Mammary epithelial cell (primary cell): ENCODE measurements at regions of chr3 and their contacts with region 1.

Region 1: DNA sequence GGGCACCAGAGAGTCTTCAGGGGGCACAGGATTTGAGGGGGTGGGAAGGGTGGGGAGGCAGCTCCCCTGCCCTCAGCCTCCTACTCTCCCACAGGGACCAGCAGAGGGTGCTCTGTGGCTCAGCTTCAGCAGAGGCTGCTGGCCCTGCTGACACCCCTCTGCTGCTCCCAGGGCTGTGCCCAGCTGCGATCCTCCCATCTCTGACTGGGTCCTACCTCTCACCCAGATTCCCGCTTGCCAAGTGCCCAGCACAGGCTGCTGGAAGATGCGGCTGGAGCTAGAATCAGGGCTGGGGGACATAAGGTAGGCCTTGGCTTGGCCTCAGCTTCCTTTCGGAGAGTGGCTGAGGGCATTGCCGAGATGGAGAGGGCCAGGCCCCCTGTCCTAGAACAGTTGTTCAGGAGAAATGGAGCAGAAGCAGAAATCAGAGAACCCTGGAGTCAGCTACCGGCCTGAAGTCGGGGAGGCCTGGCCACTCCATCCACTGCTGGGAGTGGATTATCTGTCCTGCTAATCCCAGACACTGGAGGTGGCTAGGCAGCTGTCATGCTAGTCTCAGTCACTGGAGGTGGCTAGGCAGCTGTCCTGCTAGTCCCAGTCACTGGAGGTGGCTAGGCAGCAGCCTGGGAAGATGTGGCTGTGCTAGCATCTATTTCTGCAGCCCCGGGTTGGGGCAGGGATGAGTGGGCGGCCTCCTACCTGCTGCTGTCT is 3.9 kb downstream of the GRM2 start:
- DNase-seq: no peak
- H3K4me3 ChIP-seq: no peak overlapping the region
- H3K27ac ChIP-seq: no peak overlapping the region
- H3K4me1 ChIP-seq: no peaks in the 10 kb centered on the region
- H3K27me3 ChIP-seq: no peaks in the 10 kb centered on the region
- CTCF ChIP-seq: no peak

Region 2: DNA sequence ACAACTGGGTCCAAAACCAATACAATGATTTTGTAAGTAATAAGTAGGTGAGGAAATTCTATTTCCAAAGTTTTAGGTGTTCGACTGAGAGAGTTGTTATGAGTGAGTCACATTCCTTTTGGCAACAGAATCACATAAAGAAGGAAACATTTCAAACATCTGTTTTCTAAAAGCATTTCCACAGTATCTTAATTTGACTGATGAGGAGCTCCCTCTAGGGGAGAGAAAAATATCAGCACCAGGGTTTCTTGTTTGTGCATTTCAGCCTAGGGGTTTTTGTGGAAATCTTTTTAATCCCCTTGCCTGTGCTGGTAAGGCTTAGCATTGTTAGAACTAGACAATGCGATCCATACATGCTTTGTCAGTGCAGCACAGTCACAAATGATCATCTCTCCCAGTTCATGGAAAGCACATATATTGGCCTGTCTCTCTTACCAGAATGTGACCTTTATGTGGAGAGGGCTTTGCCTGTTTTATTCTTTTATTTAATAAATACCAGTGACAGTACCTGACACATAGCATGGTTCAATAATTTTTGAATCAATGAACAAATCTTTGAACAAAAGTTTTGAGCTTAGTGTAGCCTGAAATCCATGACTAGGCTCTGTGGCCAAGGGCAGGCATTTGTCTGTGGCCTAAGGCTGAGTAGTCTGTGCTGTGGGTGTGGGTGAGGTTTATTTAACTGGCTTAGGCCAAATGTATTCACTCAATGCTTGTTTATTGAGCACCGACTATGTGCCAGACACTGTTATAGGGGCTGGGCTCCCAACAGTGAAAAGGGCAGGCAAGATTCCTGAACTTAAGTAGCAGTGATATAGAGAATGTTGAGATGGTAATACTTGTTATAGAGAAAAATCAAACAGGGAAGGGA is 89.3 kb after region 1 on chr3:
- CTCF ChIA-PET with region 1: interaction called, 6 read pairs
- dilution Hi-C with region 1: no loop called
- in situ Hi-C with region 1: no loop called
- intact Hi-C with region 1: loop called (anchors 2 kb)
- DNase-seq: peak; percentile 65
- H3K4me3 ChIP-seq: no peak overlapping the region
- H3K27ac ChIP-seq: no peak overlapping the region
- H3K4me1 ChIP-seq: peaks cover 10% of the 10 kb centered on the region
- H3K27me3 ChIP-seq: no peaks in the 10 kb centered on the region
- CTCF ChIP-seq: peak; percentile 80 to 90